ENCODE measurements at regions of chr5 and their contacts with region 1.

Region 1: DNA sequence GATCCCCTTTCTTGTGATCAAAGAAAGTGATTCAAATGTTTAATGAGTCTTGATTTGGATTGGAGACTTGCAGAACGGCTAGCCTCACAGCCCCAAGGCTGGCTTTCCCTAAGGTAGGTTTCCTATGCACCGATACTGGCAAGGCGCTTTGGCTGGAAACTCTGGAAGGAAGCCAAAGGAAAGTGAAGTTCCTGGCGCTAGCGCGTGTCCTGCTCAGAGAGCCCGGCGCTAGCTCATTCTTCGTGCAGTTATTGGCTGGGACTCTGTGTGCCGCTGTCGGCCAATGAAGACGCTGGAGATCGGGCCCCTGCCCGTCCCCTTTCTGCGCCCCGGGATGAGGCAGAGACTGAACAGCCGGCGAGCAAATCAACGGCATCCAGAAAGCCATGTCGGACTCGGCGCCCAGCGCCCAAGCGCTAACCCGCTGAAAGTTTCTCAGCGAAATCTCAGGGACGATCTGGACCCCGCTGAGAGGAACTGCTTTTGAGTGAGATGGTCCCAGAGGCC is at the start of gene PCDHGC3:
- DNase-seq: peak; percentile 85
- H3K4me3 ChIP-seq: peak within 1 kb of the TSS; percentile 79
- H3K27ac ChIP-seq: peak within 1 kb of the TSS; percentile 50
- H3K4me1 ChIP-seq: peaks cover 51% of the 10 kb centered on the region
- CTCF ChIP-seq: peak; percentile 72
- total RNA-seq, gene PCDHGC3: 20.4 and 27.2 TPM in 2 replicates

Region 2: GRCh38 chr5:141186897-141187512 is 288.7 kb before region 1 on chr5 and contains the start of gene PCDHB9:
- CTCF ChIA-PET with region 1: no interaction called
- POLR2A ChIA-PET with region 1: no interaction called
- intact Hi-C with region 1: no loop called
- DNase-seq: peak; percentile 56
- H3K4me3 ChIP-seq: no peak within 1 kb of the TSS
- H3K27ac ChIP-seq: no peak within 1 kb of the TSS
- H3K4me1 ChIP-seq: no peaks in the 10 kb centered on the region
- CTCF ChIP-seq: peak; percentile 97
- total RNA-seq, gene PCDHB9: 0.06 TPM in 1 of 2 replicates, not detected in the other

Region 3: DNA sequence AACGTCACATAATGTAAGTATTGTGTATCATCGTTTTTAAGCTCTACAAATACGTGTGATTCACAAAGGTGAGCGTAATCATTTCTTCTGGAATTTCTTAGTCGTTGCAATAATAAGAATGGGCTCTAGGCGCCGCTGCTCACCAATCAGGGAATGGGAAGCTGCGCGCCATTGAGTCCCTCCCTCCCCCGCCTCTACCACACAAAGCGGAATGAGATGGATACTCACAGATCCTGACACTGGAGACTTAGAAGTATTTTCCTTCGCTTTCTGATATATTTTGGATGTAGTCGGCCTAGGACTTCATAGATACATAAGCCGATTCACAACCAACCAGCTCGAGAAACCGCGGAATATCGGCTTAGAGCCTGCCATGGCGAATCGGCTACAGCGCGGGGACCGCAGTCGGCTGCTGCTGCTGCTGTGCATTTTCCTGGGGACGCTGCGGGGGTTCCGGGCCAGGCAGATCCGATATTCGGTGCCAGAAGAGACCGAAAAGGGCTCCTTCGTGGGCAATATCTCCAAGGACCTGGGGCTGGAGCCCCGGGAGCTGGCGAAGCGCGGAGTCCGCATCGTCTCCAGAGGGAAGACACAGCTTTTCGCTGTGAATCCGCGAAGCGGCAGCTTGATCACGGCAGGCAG is 54.7 kb before region 1 on chr5 and contains the start of gene PCDHGA11:
- CTCF ChIA-PET with region 1: interaction called, 4 read pairs
- POLR2A ChIA-PET with region 1: interaction called, 5 read pairs
- intact Hi-C with region 1: loop called (anchors 2 kb)
- DNase-seq: peak; percentile 76
- H3K4me3 ChIP-seq: peak within 1 kb of the TSS; percentile 64
- H3K27ac ChIP-seq: no peak within 1 kb of the TSS
- H3K4me1 ChIP-seq: peaks cover 7% of the 10 kb centered on the region
- CTCF ChIP-seq: peak; percentile 96
- total RNA-seq, gene PCDHGA11: 4.8 and 6.8 TPM in 2 replicates

Region 4: DNA sequence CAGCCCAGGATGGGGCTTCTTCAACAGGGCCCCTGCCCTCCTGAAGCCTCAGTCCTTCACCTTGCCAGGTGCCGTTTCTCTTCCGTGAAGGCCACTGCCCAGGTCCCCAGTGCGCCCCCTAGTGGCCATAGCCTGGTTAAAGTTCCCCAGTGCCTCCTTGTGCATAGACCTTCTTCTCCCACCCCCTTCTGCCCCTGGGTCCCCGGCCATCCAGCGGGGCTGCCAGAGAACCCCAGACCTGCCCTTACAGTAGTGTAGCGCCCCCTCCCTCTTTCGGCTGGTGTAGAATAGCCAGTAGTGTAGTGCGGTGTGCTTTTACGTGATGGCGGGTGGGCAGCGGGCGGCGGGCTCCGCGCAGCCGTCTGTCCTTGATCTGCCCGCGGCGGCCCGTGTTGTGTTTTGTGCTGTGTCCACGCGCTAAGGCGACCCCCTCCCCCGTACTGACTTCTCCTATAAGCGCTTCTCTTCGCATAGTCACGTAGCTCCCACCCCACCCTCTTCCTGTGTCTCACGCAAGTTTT is 36.8 kb after region 1 on chr5:
- CTCF ChIA-PET with region 1: interaction called, 16 read pairs
- POLR2A ChIA-PET with region 1: interaction called, 109 read pairs
- intact Hi-C with region 1: loop called (anchors 1 kb)
- DNase-seq: peak; percentile 90
- H3K4me3 ChIP-seq: peak overlapping the region; percentile 65
- H3K27ac ChIP-seq: peak overlapping the region; percentile 99
- H3K4me1 ChIP-seq: peaks cover 100% of the 10 kb centered on the region
- CTCF ChIP-seq: peak; percentile 98

Region 5: GRCh38 chr5:141557681-141558136 is 82.0 kb after region 1 on chr5:
- CTCF ChIA-PET with region 1: interaction called, 23 read pairs
- POLR2A ChIA-PET with region 1: interaction called, 13 read pairs
- intact Hi-C with region 1: loop called (anchors 1 kb)
- DNase-seq: peak; percentile 86
- H3K4me3 ChIP-seq: no peak overlapping the region
- H3K27ac ChIP-seq: peak overlapping the region; percentile 36
- H3K4me1 ChIP-seq: peaks cover 30% of the 10 kb centered on the region
- CTCF ChIP-seq: peak; percentile 99

Measured in OCI-LY7 (cell line).